ENCODE measurements at regions of chr12 and their contacts with region 1.

Region 1: GRCh38 chr12:56224102-56224701 is at the start of gene NABP2:
- DNase-seq: peak; percentile 91
- H3K4me3 ChIP-seq: peak within 1 kb of the TSS; percentile 85
- H3K27me3 ChIP-seq: no peaks in the 10 kb centered on the region
- CTCF ChIP-seq: peak; percentile 82
- polyA plus RNA-seq, gene NABP2: 47.5 and 52.0 TPM in 2 replicates

Region 2: DNA sequence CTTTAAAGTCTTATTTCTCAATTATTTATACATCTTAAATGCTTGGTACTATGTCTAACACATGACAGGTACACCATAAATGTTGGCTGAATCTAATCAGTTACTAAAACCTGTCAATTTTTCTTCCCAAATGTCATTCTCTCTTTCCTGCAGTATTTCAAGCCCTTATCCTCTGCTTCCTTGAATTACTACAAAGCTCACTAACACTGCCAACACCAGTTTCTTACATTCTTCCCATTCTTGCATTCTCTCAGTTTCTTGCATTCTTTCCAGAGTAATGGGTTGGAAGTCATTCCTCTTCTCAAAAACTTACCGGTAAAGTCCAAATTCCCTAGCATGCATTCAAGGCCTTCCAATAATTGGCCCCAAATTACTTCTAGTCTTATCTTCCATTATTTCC is 25.4 kb before region 1 on chr12:
- CTCF ChIA-PET with region 1: interaction called, 132 read pairs
- POLR2A ChIA-PET with region 1: interaction called, 25 read pairs
- DNase-seq: no peak
- H3K4me3 ChIP-seq: no peak overlapping the region
- H3K27me3 ChIP-seq: no peaks in the 10 kb centered on the region
- CTCF ChIP-seq: no peak

Region 3: DNA sequence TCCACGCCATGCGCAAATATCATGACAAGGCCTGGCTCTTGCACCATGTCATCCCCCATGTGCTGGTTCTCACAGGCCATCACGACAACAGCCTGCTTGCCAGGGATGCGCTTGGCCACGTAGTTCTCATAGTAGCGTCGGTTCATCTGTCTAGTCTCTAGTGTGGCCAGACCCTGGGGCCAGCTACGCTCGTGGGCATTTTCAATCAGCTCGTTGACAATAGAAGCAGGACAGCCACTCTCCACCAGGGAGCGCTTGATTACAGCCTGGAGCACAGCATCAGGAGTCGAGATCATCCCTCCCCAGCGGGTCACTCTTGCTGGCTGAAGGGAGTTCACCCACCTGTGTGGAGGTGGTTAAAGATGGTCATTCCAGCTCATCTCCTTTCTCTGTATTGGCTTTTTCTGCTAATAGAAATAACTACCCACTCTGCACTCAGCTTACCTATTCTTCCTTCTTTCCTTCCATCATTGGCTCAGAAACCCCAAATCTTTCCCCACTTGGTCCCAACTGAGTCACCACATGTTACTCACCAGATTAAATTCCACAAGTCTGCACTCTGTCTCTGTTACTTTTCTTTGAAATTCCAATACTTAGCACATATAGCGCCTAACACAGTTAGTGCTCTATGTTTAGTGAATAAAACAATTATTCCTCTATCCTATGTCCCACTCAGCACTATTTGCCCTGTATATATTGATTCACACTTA is 17.6 kb before region 1 on chr12:
- CTCF ChIA-PET with region 1: interaction called, 35 read pairs
- POLR2A ChIA-PET with region 1: no interaction called
- DNase-seq: no peak
- H3K4me3 ChIP-seq: no peak overlapping the region
- H3K27me3 ChIP-seq: no peaks in the 10 kb centered on the region
- CTCF ChIP-seq: peak; percentile 64

Region 4: GRCh38 chr12:56258057-56258819 is 34.0 kb after region 1 on chr12 and contains the start of gene ANKRD52:
- CTCF ChIA-PET with region 1: interaction called, 19 read pairs
- POLR2A ChIA-PET with region 1: interaction called, 3 read pairs
- DNase-seq: no peak
- H3K4me3 ChIP-seq: peak within 1 kb of the TSS; percentile 81
- H3K27me3 ChIP-seq: no peaks in the 10 kb centered on the region
- CTCF ChIP-seq: no peak
- polyA plus RNA-seq, gene ANKRD52: 21.0 and 26.8 TPM in 2 replicates